Activated B cell treated with CpG ODN at 0.5 μM for 24 hours (primary cell): ENCODE measurements at regions of chr1 and their contacts with region 1.

Region 1: GRCh38 chr1:155688324-155689080 is at the start of gene YY1AP1:
- DNase-seq: peak; percentile 92
- ATAC-seq: peak; percentile 85
- H3K4me3 Mint-ChIP-seq: peak within 1 kb of the TSS; percentile 98
- H3K27ac Mint-ChIP-seq: peak within 1 kb of the TSS; percentile 94
- H3K4me1 Mint-ChIP-seq: peaks cover 60% of the 10 kb centered on the region
- H3K27me3 Mint-ChIP-seq: no peaks in the 10 kb centered on the region
- CTCF ChIP-seq: no peak
- total RNA-seq, gene YY1AP1: 89.6 and 101 TPM in 2 replicates

Region 2: GRCh38 chr1:155744711-155745283 is 56.3 kb after region 1 on chr1:
- CTCF ChIA-PET with region 1: no interaction called
- POLR2A ChIA-PET with region 1: no interaction called
- intact Hi-C with region 1: loop called (anchors 2 kb)
- DNase-seq: no peak
- ATAC-seq: no peak
- H3K4me3 Mint-ChIP-seq: peak overlapping the region; percentile 94
- H3K27ac Mint-ChIP-seq: peak overlapping the region; percentile 90
- H3K4me1 Mint-ChIP-seq: peaks cover 6% of the 10 kb centered on the region
- H3K27me3 Mint-ChIP-seq: no peaks in the 10 kb centered on the region
- CTCF ChIP-seq: no peak